H1 (cell line): ENCODE measurements at regions of chr19 and their contacts with region 1.

Region 1: DNA sequence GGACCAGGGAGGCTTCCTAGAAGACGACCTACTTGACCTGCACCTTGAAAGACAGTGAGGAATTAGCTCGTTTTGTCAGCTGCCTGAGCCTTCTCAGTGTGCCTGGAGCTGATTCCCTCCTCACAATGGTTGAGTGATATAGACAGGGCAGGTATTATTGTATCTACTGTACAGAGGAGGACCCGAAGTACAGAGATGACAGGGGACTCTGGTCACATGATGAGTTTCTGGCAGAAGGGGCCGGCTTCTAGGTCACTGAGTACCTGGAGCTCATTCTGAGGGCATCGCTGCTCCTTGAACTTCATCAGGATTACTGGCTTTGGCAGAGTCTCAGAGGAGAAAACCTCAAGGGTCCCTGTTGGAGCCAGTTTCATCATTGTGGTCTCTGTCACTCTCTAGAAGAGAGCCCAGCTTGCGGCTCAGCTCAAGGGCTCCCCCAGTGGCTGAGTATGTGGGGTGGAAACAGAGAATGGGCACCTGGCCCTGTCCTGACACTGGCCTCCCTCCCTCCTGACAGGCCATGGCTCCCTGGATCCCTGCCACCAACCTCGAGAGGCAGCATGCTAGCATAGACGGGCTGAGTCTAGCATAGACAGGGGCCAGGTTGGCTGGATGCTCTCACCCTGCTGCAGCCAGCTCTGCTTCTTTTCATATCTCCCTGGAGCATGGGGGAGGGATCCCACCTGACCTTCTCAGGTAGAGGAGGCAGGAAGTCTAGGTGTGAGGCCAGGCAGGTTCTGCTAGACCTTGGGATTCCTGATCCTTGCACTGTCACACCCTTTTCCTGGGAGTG is 38.7 kb downstream of the NFIX start:
- DNase-seq: peak in 1 of 2 experiments; percentile 86
- H3K4me3 ChIP-seq: no peak overlapping the region
- H3K27ac ChIP-seq: no peak overlapping the region
- H3K4me1 ChIP-seq: no peaks in the 10 kb centered on the region
- H3K27me3 ChIP-seq: peaks cover 10 to 67% (median 42%) of the 10 kb centered on the region in 4 experiments
- CTCF ChIP-seq: peak; percentile 86 to 95 (median 93)
- EP300 ChIP-seq: no peak
- POLR2A ChIP-seq: no peak
- RAD21 ChIP-seq: peak; percentile 59 to 74; a peak in 3 of 4 replicates

Region 2: GRCh38 chr19:12946092-12946721 is 87.8 kb before region 1 on chr19:
- CTCF ChIA-PET with region 1: no interaction called
- POLR2A ChIA-PET with region 1: no interaction called
- DNase-seq: peak; percentile 68 to 89
- H3K4me3 ChIP-seq: peak overlapping the region; percentile 77 to 93 (median 90)
- H3K27ac ChIP-seq: peak overlapping the region; percentile 96
- H3K4me1 ChIP-seq: peaks cover 0 to 3% (median under 1%) of the 10 kb centered on the region in 4 experiments; a peak in 1 of 7 replicates
- H3K27me3 ChIP-seq: no peaks in the 10 kb centered on the region
- CTCF ChIP-seq: no peak
- EP300 ChIP-seq: no peak
- POLR2A ChIP-seq: peak; percentile 11 to 84
- RAD21 ChIP-seq: no peak

Region 3: GRCh38 chr19:12974301-12975220 is 59.5 kb before region 1 on chr19:
- CTCF ChIA-PET with region 1: interaction called, 97 read pairs
- POLR2A ChIA-PET with region 1: interaction called, 3 read pairs
- DNase-seq: no peak
- H3K4me3 ChIP-seq: no peak overlapping the region
- H3K27ac ChIP-seq: no peak overlapping the region
- H3K4me1 ChIP-seq: peaks cover 0 to 2% (median 0%) of the 10 kb centered on the region in 4 experiments; a peak in 2 of 7 replicates
- H3K27me3 ChIP-seq: no peaks in the 10 kb centered on the region
- CTCF ChIP-seq: no peak
- EP300 ChIP-seq: no peak
- POLR2A ChIP-seq: no peak
- RAD21 ChIP-seq: no peak

Region 4: GRCh38 chr19:13002166-13002898 is 31.7 kb before region 1 on chr19:
- CTCF ChIA-PET with region 1: interaction called, 175 read pairs
- POLR2A ChIA-PET with region 1: no interaction called
- DNase-seq: no peak
- H3K4me3 ChIP-seq: no peak overlapping the region
- H3K27ac ChIP-seq: no peak overlapping the region
- H3K4me1 ChIP-seq: peaks cover 0 to 6% (median 0%) of the 10 kb centered on the region in 4 experiments; a peak in 1 of 7 replicates
- H3K27me3 ChIP-seq: peaks cover 16 to 94% (median 74%) of the 10 kb centered on the region in 4 experiments
- CTCF ChIP-seq: no peak
- EP300 ChIP-seq: no peak
- POLR2A ChIP-seq: no peak
- RAD21 ChIP-seq: no peak

Region 5: DNA sequence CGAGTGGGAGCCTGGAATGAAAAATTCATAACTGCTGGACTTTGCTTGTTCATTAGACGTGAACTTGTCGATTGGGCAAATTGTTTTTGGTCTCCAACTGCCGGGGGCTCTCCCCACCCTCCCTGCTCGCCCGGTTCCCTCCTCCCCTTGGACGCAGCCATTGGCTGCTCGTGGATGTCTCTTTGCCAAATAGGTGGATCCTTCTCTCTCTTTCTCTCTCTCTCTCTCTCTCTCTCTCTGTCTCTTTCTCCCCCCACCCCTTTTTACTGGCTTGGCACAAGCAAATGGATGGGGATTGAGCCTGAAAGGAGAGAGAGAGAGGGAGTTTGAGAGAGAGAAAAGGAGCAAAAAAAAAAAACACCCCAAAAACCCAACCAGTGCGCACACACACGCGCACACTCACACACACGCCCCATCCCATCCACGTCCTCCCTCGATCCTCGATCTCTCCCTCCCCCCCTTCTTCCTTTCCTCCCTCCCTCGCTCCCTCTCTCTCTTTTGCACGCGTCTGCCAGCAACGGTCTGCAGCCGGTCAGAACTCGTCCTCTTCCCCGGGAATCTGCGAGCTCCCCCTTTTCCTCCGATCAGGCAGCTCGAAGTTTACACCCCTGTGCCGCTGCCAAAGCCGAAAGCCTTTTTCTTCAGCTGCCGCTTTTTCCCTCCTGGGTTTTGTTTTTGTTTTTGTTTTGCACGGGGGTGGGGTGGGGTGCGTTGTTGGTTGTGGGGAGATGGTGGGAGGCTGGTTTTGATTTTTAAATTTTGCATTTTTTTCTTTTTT is 11.0 kb before region 1 on chr19:
- CTCF ChIA-PET with region 1: interaction called, 760 read pairs
- POLR2A ChIA-PET with region 1: interaction called, 14 read pairs
- DNase-seq: no peak
- H3K4me3 ChIP-seq: peak overlapping the region in 2 of 4 experiments; percentile 5 to 46; a peak in 3 of 8 replicates
- H3K27ac ChIP-seq: no peak overlapping the region
- H3K4me1 ChIP-seq: peaks cover 11 to 34% (median 29%) of the 10 kb centered on the region in 4 experiments
- H3K27me3 ChIP-seq: peaks cover 81 to 98% (median 96%) of the 10 kb centered on the region in 4 experiments
- CTCF ChIP-seq: no peak
- EP300 ChIP-seq: no peak
- POLR2A ChIP-seq: no peak
- RAD21 ChIP-seq: no peak

Region 6: DNA sequence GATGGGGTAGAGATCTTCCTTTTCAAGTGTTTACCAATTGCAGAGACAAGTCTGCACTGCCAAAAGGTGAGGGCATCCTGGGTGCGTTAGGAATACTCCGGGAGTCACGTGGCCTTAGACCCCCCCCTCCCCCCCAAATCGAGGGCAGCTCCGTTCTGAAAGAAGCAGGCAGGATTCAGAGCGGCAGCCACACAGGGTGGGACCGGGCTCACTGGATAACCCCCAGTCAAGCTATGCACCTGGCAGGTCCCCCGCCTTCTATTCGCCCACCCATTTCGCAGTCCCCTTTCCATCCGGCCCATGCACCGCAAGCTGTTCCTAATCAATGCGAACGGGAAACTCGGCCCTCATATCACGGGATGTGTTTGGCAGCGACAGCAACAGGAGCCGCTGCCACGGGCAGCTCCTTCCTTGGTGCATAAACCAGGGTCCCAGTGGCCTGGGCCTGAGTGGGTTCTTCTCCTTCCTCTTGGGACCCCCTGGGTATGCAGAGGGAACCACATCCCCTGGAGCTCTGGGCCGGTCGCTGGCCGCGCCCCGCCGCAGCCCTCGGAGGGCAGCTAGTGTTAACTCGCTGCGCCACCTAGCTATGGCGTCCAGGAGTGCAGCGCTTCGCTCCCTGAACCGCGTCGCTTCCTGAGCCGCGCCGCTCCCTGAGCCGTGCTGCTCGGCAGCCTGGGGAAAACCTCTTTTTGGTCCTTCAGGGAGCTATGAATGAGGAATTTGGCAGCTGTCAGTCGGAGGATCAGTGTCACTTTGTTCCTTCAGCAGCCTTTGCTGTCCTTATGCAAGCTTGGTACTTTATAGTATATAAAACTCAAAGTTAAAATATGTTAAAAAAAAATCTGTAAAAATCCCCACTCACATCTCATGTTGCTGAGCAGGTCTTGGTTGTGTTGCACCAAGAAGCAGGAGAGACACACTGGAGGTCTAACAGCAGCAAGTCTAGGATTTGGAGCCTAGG is 27.2 kb after region 1 on chr19:
- CTCF ChIA-PET with region 1: interaction called, 1,145 read pairs
- POLR2A ChIA-PET with region 1: interaction called, 18 read pairs
- DNase-seq: peak in 1 of 2 experiments; percentile 97
- H3K4me3 ChIP-seq: peak overlapping the region; percentile 17 to 60 (median 46); a peak in 7 of 8 replicates
- H3K27ac ChIP-seq: no peak overlapping the region
- H3K4me1 ChIP-seq: peaks cover 0 to 14% (median 9%) of the 10 kb centered on the region in 4 experiments; a peak in 6 of 7 replicates
- H3K27me3 ChIP-seq: peaks cover 56 to 76% (median 72%) of the 10 kb centered on the region in 4 experiments
- CTCF ChIP-seq: peak; percentile 95 to 98 (median 95)
- EP300 ChIP-seq: peak in 1 of 2 experiments; percentile 46; a peak in 1 of 3 replicates
- POLR2A ChIP-seq: no peak
- RAD21 ChIP-seq: peak; percentile 82 to 91

Region 7: DNA sequence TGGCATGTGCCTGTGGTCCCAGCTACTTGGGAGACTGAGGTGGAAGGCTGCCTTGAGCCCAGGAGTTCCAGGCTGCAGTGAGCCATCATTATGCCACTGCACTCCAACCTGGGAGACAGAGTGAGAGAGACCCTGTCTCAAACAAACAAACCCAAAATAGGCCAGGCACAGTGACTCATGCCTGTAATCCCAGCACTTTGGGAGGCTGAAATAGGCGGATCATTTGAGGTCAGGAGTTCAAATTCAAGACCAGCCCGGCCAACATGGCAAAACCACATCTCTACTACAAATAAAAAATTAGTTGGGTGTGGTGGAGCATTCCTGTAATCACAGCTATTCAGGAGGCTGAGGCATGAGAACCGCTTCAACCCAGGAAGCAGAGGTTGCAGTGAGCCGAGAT is 109.1 kb after region 1 on chr19:
- CTCF ChIA-PET with region 1: no interaction called
- POLR2A ChIA-PET with region 1: no interaction called
- DNase-seq: no peak
- H3K4me3 ChIP-seq: no peak overlapping the region
- H3K27ac ChIP-seq: no peak overlapping the region
- H3K4me1 ChIP-seq: peaks cover 0 to 8% (median 3%) of the 10 kb centered on the region in 4 experiments; a peak in 3 of 7 replicates
- H3K27me3 ChIP-seq: no peaks in the 10 kb centered on the region
- CTCF ChIP-seq: no peak
- EP300 ChIP-seq: no peak
- POLR2A ChIP-seq: no peak
- RAD21 ChIP-seq: no peak

Region 8: GRCh38 chr19:13228561-13228960 is 194.5 kb after region 1 on chr19:
- CTCF ChIA-PET with region 1: no interaction called
- POLR2A ChIA-PET with region 1: no interaction called
- DNase-seq: no peak
- H3K4me3 ChIP-seq: no peak overlapping the region
- H3K27ac ChIP-seq: no peak overlapping the region
- H3K4me1 ChIP-seq: peaks cover 0 to 4% (median 0%) of the 10 kb centered on the region in 4 experiments; a peak in 3 of 7 replicates
- H3K27me3 ChIP-seq: no peaks in the 10 kb centered on the region
- CTCF ChIP-seq: no peak
- EP300 ChIP-seq: no peak
- POLR2A ChIP-seq: no peak
- RAD21 ChIP-seq: no peak